ENCODE measurements at regions of chr4 and their contacts with region 1.

Region 1: DNA sequence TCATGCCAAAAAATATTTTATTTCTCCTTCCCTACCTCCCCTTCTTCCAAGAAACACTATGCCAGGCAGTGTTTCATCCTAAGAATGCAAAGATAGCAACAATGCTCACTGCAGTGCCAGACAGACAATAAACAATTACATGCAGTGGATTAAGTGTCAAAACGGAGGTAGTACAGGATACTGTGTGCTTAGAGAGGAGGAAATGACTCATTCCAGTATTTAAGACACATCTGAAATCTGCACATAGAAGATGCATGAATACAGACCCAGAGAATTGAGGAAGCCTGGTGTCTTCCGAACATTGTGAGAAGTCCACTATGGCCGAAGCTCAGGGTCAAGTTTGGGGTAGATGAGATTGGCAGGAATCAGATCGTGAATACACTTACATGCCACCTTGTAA is 326.4 kb downstream of the PPP3CA start:
- DNase-seq: no peak
- ATAC-seq: peak; percentile 78
- H3K4me3 Mint-ChIP-seq: no peak overlapping the region
- H3K27ac Mint-ChIP-seq: peak overlapping the region; percentile 40
- H3K4me1 Mint-ChIP-seq: peaks cover 49% of the 10 kb centered on the region
- H3K27me3 Mint-ChIP-seq: no peaks in the 10 kb centered on the region
- CTCF ChIP-seq: no peak

Region 2: GRCh38 chr4:101037938-101038413 is 17.0 kb after region 1 on chr4:
- CTCF ChIA-PET with region 1: interaction called, 3 read pairs
- POLR2A ChIA-PET with region 1: interaction called, 3 read pairs
- intact Hi-C with region 1: loop called (anchors 2 kb)
- DNase-seq: peak; percentile 19
- ATAC-seq: peak; percentile 44
- H3K4me3 Mint-ChIP-seq: no peak overlapping the region
- H3K27ac Mint-ChIP-seq: peak overlapping the region; percentile 77
- H3K4me1 Mint-ChIP-seq: peaks cover 22% of the 10 kb centered on the region
- H3K27me3 Mint-ChIP-seq: no peaks in the 10 kb centered on the region
- CTCF ChIP-seq: no peak

Measured in activated CD8-positive, alpha-beta T cell treated with anti-CD3 and anti-CD28 coated beads for 36 hours (primary cell).